MCF 10A (cell line): ENCODE measurements at regions of chr20 and their contacts with region 1.

Region 1: GRCh38 chr20:38057351-38057972 is 23.9 kb downstream of the RPRD1B start:
- DNase-seq: peak; percentile 88
- H3K4me3 Mint-ChIP-seq: no peak overlapping the region
- H3K27ac Mint-ChIP-seq: no peak overlapping the region
- H3K4me1 Mint-ChIP-seq: peaks cover 11% of the 10 kb centered on the region
- H3K27me3 Mint-ChIP-seq: no peaks in the 10 kb centered on the region
- CTCF ChIP-seq: peak; percentile 87

Region 2: DNA sequence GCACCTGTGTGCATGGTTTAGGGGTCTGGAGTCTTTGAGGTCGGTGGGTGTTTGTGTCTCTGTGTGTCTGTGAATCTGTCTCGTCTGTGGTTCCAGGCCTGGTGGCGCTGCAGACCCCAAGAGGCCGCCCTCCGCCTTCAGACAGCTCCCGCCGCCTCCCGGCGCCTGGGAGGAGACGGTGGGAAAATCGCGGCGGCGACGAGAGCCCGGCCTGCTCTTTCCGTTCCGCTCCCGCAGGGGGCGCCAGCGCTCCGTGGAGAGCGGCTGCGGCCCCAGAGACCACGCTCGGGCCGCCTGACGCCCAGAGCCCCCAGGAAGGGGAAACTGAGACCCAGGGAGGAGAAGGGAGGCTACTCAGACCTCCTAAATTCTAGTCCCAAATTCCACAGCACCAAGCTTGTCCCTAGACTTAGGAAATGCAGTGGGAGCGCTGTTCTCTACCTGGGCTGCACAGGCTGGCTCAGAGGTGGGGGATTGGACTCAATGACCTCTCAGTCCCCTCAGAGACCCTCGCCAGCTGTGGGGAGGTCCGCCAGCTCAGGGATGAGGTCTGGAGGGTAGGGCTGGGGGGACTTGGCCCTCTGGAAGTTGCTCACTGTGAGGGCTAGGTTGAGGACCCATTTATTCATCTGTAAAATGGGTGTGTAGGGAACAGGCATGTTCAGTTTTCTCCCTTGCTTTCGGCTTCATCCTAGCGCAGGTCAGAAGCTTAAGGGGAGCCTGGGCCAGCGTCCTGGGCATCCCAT is 492.9 kb before region 1 on chr20:
- CTCF ChIA-PET with region 1: interaction called, 25 read pairs
- POLR2A ChIA-PET with region 1: no interaction called
- intact Hi-C with region 1: loop called (anchors 5 kb)
- DNase-seq: peak; percentile 42
- H3K4me3 Mint-ChIP-seq: no peak overlapping the region
- H3K27ac Mint-ChIP-seq: no peak overlapping the region
- H3K4me1 Mint-ChIP-seq: no peaks in the 10 kb centered on the region
- H3K27me3 Mint-ChIP-seq: peaks cover 61% of the 10 kb centered on the region
- CTCF ChIP-seq: peak; percentile 98

Region 3: DNA sequence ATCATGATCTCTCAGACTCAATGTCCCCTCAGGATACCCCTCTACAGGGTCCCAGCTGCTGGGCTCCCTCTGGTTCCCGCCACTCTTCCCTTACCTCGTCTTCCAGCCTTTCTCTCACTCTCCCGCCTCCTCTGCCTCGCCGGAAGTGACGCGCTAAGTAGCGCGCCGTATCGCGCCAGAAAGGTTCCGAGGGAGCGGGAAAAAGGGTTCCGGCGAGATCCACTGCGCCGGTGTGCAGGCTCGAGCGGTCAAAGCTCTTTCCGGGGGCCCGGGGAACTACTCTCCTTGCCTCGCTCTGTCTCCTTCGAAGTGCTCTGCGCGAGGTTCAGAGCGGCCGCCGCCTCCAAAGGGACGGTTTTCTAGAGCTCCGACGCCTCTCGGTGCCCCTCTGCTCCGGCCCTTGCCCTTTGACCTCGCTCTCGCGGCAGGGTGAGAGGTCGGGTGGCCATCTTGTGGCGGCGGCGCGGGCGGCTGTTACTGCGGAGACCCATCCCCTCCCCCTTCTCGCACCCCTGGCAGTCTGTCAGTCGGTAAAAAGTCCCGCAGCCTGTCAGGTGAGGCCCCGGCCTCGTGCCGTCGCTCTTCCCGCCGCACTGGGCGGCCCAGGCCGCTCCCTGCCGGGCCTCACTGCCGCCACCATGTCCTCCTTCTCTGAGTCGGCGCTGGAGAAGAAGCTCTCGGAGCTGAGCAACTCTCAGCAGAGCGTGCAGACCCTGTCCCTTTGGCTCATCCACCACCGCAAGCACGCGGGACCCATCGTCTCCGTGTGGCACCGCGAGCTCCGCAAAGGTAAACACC is 24.0 kb before region 1 on chr20 and contains the starts of genes RPRD1B and TTI1:
- CTCF ChIA-PET with region 1: interaction called, 16 read pairs
- POLR2A ChIA-PET with region 1: interaction called, 38 read pairs
- intact Hi-C with region 1: no loop called
- DNase-seq: peak; percentile 92
- H3K4me3 Mint-ChIP-seq: peak within 1 kb of the TSS; percentile 82
- H3K27ac Mint-ChIP-seq: peak within 1 kb of the TSS; percentile 92
- H3K4me1 Mint-ChIP-seq: peaks cover 41% of the 10 kb centered on the region
- H3K27me3 Mint-ChIP-seq: no peaks in the 10 kb centered on the region
- CTCF ChIP-seq: no peak
- total RNA-seq, gene RPRD1B: 42.6 and 53.0 TPM in 2 replicates
- total RNA-seq, gene TTI1: 17.1 and 18.3 TPM in 2 replicates

Region 4: DNA sequence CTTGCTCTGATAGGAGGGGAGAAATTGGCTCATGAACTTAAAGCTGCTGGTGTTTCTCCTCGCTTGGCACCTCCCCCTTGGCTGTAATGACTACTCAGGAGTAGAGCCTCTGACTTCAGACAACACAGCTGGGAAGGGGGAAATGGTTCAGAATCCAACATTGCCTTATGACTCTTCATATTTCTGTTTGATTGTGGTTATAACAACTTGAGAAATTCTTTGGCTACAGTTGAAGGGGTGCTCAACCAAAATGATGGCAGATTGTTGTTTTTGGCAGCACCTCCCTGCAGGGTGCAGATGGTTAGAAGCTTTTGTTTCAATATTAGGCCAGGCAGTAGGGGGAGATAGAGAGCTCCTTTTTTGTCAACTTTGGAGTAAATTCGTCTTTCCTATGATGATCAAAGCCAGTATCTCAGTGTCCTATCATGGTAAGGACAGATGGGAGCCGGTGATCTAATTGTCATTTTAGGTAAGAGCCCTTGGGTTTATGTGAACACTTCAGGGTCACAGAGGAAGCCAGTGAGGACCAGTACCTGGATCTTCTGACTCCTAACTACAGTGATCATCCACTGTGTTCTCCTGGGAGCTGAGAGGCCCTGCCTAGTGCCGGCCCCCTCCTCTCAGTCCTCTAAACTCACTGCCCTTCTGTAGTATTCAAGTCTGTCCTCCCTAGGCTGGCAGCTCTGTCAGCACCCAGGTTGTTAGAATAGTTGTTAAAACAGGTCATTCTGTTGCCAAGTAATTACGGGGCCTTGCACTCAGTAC is 16.0 kb after region 1 on chr20:
- CTCF ChIA-PET with region 1: interaction called, 155 read pairs
- POLR2A ChIA-PET with region 1: interaction called, 5 read pairs
- intact Hi-C with region 1: no loop called
- DNase-seq: peak; percentile 94
- H3K4me3 Mint-ChIP-seq: peak overlapping the region; percentile 31
- H3K27ac Mint-ChIP-seq: peak overlapping the region; percentile 44
- H3K4me1 Mint-ChIP-seq: peaks cover 21% of the 10 kb centered on the region
- H3K27me3 Mint-ChIP-seq: no peaks in the 10 kb centered on the region
- CTCF ChIP-seq: peak; percentile 47

Region 5: GRCh38 chr20:38165089-38165989 is 107.9 kb after region 1 on chr20 and contains the start of gene TGM2:
- CTCF ChIA-PET with region 1: interaction called, 14 read pairs
- POLR2A ChIA-PET with region 1: interaction called, 3 read pairs
- intact Hi-C with region 1: no loop called
- DNase-seq: peak; percentile 75
- H3K4me3 Mint-ChIP-seq: peak within 1 kb of the TSS; percentile 11
- H3K27ac Mint-ChIP-seq: peak within 1 kb of the TSS; percentile 61
- H3K4me1 Mint-ChIP-seq: peaks cover 41% of the 10 kb centered on the region
- H3K27me3 Mint-ChIP-seq: no peaks in the 10 kb centered on the region
- CTCF ChIP-seq: peak; percentile 75
- total RNA-seq, gene TGM2: 0.76 and 1.5 TPM in 2 replicates

Region 6: DNA sequence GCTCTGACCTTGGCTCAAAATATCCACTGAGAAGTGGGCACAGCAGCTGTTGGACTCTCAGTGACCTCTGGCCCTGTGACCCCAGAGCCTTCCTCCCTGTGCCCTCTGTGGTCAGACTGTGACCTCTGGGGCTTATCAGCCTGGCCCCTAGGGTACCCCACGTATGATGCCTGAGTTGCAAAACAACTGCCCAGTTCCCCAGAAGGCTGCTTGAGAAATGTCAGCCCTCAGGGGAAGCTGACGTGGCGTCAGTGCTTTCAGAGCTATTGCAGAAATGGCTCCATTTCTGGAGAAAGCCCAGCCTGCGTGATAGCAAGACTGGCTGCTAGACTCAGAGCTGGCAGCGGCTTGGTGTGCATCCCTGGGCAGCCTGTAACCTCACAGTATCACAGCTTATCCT is 139.1 kb after region 1 on chr20:
- CTCF ChIA-PET with region 1: interaction called, 11 read pairs
- POLR2A ChIA-PET with region 1: no interaction called
- intact Hi-C with region 1: no loop called
- DNase-seq: peak; percentile 82
- H3K4me3 Mint-ChIP-seq: no peak overlapping the region
- H3K27ac Mint-ChIP-seq: peak overlapping the region; percentile 3
- H3K4me1 Mint-ChIP-seq: peaks cover 39% of the 10 kb centered on the region
- H3K27me3 Mint-ChIP-seq: no peaks in the 10 kb centered on the region
- CTCF ChIP-seq: no peak

Region 7: GRCh38 chr20:38321959-38322598 is 264.6 kb after region 1 on chr20:
- CTCF ChIA-PET with region 1: interaction called, 7 read pairs
- POLR2A ChIA-PET with region 1: no interaction called
- intact Hi-C with region 1: loop called (anchors 1 kb)
- DNase-seq: peak; percentile 63
- H3K4me3 Mint-ChIP-seq: no peak overlapping the region
- H3K27ac Mint-ChIP-seq: no peak overlapping the region
- H3K4me1 Mint-ChIP-seq: no peaks in the 10 kb centered on the region
- H3K27me3 Mint-ChIP-seq: peaks cover 40% of the 10 kb centered on the region
- CTCF ChIP-seq: peak; percentile 60